B cell (primary cell): ENCODE measurements at regions of chr18 and their contacts with region 1.

Region 1: GRCh38 chr18:70506511-70506910 is 217.7 kb downstream of the SOCS6 start:
- DNase-seq: no peak
- ATAC-seq: no peak
- H3K4me3 ChIP-seq: no peak overlapping the region
- H3K4me3 Mint-ChIP-seq: no peak overlapping the region
- H3K27ac ChIP-seq: no peak overlapping the region
- H3K27ac Mint-ChIP-seq: no peak overlapping the region
- H3K4me1 ChIP-seq: no peaks in the 10 kb centered on the region
- H3K4me1 Mint-ChIP-seq: no peaks in the 10 kb centered on the region
- H3K27me3 ChIP-seq: no peaks in the 10 kb centered on the region
- H3K27me3 Mint-ChIP-seq: no peaks in the 10 kb centered on the region
- CTCF ChIP-seq: no peak

Region 2: GRCh38 chr18:70491734-70492348 is 14.7 kb before region 1 on chr18:
- CTCF ChIA-PET with region 1: interaction called, 14 read pairs
- POLR2A ChIA-PET with region 1: no interaction called
- intact Hi-C with region 1: no loop called
- DNase-seq: peak; percentile 36
- ATAC-seq: no peak
- H3K4me3 ChIP-seq: no peak overlapping the region
- H3K4me3 Mint-ChIP-seq: no peak overlapping the region
- H3K27ac ChIP-seq: no peak overlapping the region
- H3K27ac Mint-ChIP-seq: no peak overlapping the region
- H3K4me1 ChIP-seq: no peaks in the 10 kb centered on the region
- H3K4me1 Mint-ChIP-seq: no peaks in the 10 kb centered on the region
- H3K27me3 ChIP-seq: peaks cover 0 to 5% (median 0%) of the 10 kb centered on the region in 4 experiments
- H3K27me3 Mint-ChIP-seq: peaks cover 10% of the 10 kb centered on the region
- CTCF ChIP-seq: peak; percentile 81